ENCODE measurements at regions of chr3 and their contacts with region 1.

Region 1: DNA sequence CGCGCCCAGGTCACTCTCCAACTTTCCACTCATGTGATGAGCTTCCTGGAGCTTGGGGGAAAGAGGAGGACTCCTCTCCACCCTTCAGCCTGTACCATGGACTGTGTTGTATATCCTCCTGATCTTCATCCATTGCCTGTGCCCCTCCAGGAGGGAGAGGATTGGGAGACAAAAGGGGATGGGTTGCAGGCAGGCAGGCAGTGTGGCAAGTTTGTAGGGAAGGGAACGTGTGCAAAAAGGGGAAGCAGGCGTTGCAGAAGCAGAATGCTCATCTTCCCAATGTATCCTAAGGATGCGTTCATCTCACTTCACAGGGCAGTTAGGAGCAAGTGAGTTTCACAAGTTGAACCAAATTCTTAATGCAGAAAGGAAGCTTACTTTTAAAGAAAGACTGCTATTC is 28.1 kb upstream of the GHSR start:
- DNase-seq: no peak
- ATAC-seq: no peak
- H3K4me3 Mint-ChIP-seq: no peak overlapping the region
- H3K27ac Mint-ChIP-seq: no peak overlapping the region
- H3K4me1 Mint-ChIP-seq: peaks cover 20% of the 10 kb centered on the region
- H3K27me3 Mint-ChIP-seq: no peaks in the 10 kb centered on the region
- CTCF ChIP-seq: no peak

Region 2: DNA sequence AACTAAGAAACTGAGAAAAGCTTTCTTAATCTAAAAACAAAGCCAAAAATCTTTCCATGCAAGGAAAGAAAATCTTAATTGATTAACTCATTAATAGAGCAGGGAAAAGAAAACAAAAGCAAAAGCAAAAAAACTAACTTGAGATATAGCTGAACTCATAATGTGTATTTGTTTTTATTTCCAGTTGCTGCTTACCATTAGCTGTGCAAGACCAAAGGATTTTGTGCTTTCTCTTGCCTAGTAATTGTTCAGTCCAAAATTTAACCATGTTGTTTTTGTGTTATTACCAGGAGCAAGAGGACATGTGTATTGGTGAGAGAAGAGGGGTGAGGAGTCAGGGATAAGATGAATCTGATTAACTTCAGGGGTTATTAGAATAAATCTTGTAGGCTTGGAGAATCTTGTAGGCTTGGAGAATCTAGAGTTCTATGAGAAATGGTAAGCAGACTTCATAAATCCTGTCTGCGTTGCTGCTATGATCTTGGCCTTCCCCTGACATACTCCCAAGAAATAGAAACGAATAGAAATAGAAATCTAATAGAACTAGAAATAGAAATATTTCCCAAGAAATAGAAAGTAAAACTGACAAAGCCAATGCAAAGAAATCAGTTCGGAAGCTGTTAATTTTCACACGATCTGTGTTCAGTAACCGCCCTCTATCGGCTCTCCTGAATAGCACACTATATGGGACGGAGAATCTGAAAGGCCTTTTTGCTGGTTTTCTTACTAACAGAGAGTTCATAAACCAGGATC is 119.5 kb after region 1 on chr3:
- CTCF ChIA-PET with region 1: interaction called, 14 read pairs
- POLR2A ChIA-PET with region 1: no interaction called
- DNase-seq: no peak
- ATAC-seq: peak; percentile 73
- H3K4me3 Mint-ChIP-seq: no peak overlapping the region
- H3K27ac Mint-ChIP-seq: no peak overlapping the region
- H3K4me1 Mint-ChIP-seq: no peaks in the 10 kb centered on the region
- H3K27me3 Mint-ChIP-seq: no peaks in the 10 kb centered on the region
- CTCF ChIP-seq: peak; percentile 39; the same call in 1 of the 2 replicates

Region 3: DNA sequence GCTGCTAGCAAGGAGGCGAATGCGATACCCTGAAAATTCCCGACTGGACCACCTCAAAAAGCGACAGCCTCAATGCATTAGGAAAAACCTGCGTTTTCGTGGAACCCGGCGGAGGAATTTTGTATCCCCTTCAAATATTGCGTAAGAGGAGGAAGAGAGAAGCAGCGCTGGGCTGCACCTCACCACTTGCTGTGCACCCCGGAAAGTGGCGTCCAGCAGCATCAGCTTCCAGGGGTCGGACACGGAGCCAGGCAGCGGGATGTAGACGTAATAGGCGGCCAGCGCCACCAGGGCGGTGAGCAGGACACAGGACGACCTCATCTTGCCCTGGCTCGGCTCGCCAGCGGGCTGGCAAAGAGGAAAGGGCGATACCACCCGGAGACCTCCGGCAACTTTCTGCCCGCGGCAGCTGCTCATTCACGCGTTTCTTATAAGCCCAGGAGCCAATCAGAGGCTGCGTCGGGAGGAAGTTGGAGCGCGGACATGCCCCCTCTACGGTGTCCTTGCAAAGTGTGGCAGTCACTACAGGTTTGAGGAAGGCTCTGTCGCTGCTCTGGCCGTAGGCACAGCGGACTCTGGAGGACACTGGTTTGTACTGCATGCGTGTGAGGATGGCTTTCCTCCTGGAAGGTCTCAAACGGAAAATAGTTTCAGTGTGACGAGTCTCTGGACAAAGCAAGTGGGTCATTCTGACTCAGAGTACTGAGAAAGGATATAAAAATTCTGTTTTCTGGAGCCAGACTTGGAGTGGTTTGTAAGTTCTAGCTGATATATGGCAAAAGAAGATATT is 234.5 kb after region 1 on chr3 and contains the start of gene NCEH1:
- CTCF ChIA-PET with region 1: no interaction called
- POLR2A ChIA-PET with region 1: no interaction called
- DNase-seq: peak; percentile 87
- ATAC-seq: peak; percentile 99
- H3K4me3 Mint-ChIP-seq: peak within 1 kb of the TSS; percentile 93
- H3K27ac Mint-ChIP-seq: peak within 1 kb of the TSS; percentile 82
- H3K4me1 Mint-ChIP-seq: peaks cover 14% of the 10 kb centered on the region
- H3K27me3 Mint-ChIP-seq: no peaks in the 10 kb centered on the region; the same call in 1 of the 2 replicates
- CTCF ChIP-seq: peak; percentile 21; the same call in 1 of the 2 replicates
- total RNA-seq, gene NCEH1: 2.6 to 4.5 TPM (median 3.3 TPM) in 3 replicates

Measured in WTC11 (cell line).